ENCODE measurements at regions of chr10 and their contacts with region 1.

Region 1: GRCh38 chr10:87094373-87095235 is at the starts of genes GLUD1 and SHLD2:
- DNase-seq: peak; percentile 69 to 92 (median 86)
- H3K4me3 ChIP-seq: peak within 1 kb of the TSS; percentile 66 to 96 (median 89)
- H3K27ac ChIP-seq: peak within 1 kb of the TSS; percentile 78 to 98 (median 95)
- H3K27me3 ChIP-seq: no peaks in the 10 kb centered on the region
- CTCF ChIP-seq: peak in 3 of 56 donors; percentile 4 to 21 (median 12)
- total RNA-seq, gene GLUD1: 180 to 488 (median 250) TPM
- total RNA-seq, gene SHLD2: 9.7 to 19.5 (median 13.7) TPM

Region 2: GRCh38 chr10:86755740-86756510 is 338.7 kb before region 1 on chr10:
- intact Hi-C with region 1: loop called (anchors 2 kb)
- DNase-seq: peak; percentile 66 to 94 (median 84)
- H3K4me3 ChIP-seq: peak overlapping the region; percentile 54 to 96 (median 89)
- H3K27ac ChIP-seq: peak overlapping the region in 58 of 59 donors; percentile 40 to 97 (median 92)
- H3K27me3 ChIP-seq: no peaks in the 10 kb centered on the region
- CTCF ChIP-seq: peak in 16 of 56 donors; percentile 4 to 29 (median 18)

Region 3: GRCh38 chr10:86971232-86971991 is 123.2 kb before region 1 on chr10:
- intact Hi-C with region 1: loop called (anchors 5 kb)
- DNase-seq: peak in 2 of 10 donors; percentile 57 to 66
- H3K4me3 ChIP-seq: peak overlapping the region; percentile 25 to 75 (median 61)
- H3K27ac ChIP-seq: peak overlapping the region in 58 of 59 donors; percentile 2 to 96 (median 82)
- H3K27me3 ChIP-seq: peaks cover 0 to 3% (median 0%) of the 10 kb centered on the region in 45 donors
- CTCF ChIP-seq: peak in 3 of 56 donors; percentile 11 to 22 (median 12)

Region 4: GRCh38 chr10:87054373-87055295 is 40.0 kb before region 1 on chr10:
- intact Hi-C with region 1: loop called (anchors 5 kb)
- DNase-seq: no peak
- H3K4me3 ChIP-seq: peak overlapping the region in 2 of 59 donors; percentile 5 to 6
- H3K27ac ChIP-seq: peak overlapping the region; percentile 6 to 98 (median 91)
- H3K27me3 ChIP-seq: no peaks in the 10 kb centered on the region
- CTCF ChIP-seq: peak in 10 of 56 donors; percentile 9 to 31 (median 16)

Measured in dorsolateral prefrontal cortex (tissue), 120 donors.